Prostate gland (tissue), 2 donors: ENCODE measurements at regions of chr16 and their contacts with region 1.

Region 1: GRCh38 chr16:31179747-31180459 is at the start of gene FUS:
- DNase-seq: peak; percentile 90
- H3K4me3 ChIP-seq: peak within 1 kb of the TSS; percentile 95 to 99
- H3K27ac ChIP-seq: peak within 1 kb of the TSS; percentile 98
- H3K4me1 ChIP-seq: peaks cover 18% of the 10 kb centered on the region
- H3K27me3 ChIP-seq: no peaks in the 10 kb centered on the region
- CTCF ChIP-seq: peak in 1 of 4 experiments; percentile 4
- POLR2A ChIP-seq: peak; percentile 91
- total RNA-seq, gene FUS: 48.6 to 87.5 TPM

Region 2: DNA sequence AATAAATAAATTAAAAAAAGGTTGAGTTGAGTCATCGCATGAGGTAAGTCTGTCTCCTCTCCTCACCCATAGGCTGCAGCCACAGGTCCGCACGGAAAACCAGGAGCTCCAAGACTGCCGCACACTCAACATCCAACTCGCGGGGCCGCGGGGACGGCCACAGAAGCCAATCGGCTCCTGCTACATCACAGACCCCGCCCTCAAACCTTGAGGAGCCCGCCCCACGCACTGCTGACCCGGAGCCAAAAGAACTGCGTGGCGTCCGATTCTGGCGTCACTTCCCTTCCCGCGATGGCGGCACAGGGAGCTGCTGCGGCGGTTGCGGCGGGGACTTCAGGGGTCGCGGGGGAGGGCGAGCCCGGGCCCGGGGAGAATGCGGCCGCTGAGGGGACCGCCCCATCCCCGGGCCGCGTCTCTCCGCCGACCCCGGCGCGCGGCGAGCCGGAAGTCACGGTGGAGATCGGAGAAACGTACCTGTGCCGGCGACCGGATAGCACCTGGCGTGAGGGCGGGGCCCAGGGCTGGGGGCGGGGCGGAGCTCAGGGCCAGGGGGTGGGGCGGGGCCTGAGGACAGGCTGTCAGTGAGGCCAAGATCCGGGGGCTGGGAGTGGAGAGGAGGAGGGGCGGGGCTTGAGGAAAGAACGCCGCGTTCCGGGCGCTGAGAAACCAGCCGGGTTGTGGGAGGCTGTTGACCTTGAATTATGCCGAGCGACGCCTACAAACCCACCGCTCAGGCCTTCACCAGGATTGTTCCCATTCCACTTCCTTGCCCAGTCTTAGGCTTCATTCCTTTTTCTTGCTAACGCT is 62.3 kb before region 1 on chr16 and contains the start of gene KAT8:
- intact Hi-C with region 1: no loop called
- DNase-seq: peak; percentile 98
- H3K4me3 ChIP-seq: peak within 1 kb of the TSS; percentile 66 to 83
- H3K27ac ChIP-seq: peak within 1 kb of the TSS; percentile 96 to 98
- H3K4me1 ChIP-seq: peaks cover 3% of the 10 kb centered on the region
- H3K27me3 ChIP-seq: no peaks in the 10 kb centered on the region
- CTCF ChIP-seq: no peak
- POLR2A ChIP-seq: peak; percentile 78
- total RNA-seq, gene KAT8: 92.6 to 115 TPM

Region 3: DNA sequence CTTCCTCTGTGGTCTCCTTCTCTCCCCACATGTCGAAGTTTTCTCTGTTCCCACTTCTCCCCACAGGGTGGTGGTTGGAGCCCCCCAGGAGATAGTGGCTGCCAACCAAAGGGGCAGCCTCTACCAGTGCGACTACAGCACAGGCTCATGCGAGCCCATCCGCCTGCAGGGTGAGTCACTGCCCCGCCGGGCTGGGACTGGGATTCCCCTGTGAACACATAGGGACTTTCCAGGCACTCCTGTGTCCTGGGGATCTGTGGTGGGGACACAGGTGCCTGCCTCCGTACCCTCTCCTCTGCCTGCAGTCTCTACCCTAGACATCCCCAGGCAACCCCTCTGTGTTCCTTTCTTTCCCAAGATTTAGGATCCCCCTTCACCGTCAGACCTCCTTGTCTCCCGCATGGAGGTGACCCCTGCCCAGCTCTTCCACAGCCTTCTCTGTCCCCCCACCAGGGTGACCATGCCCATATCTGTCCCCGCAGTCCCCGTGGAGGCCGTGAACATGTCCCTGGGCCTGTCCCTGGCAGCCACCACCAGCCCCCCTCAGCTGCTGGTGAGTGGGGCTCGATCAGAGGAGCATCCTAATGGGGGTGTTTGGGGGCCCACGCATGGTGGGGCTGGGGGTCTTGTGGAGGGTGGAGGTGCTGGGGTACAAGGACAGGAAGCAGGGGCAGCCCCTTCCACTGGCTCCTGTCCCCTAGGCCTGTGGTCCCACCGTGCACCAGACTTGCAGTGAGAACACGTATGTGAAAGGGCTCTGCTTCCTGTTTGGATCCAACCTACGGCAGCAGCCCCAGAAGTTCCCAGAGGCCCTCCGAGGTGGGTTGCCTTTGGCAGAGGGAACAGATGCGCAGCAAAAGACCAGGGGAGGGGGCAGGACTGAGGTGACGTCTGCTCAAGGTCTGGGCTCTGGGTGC is 85.7 kb after region 1 on chr16:
- intact Hi-C with region 1: no loop called
- DNase-seq: no peak
- H3K4me3 ChIP-seq: no peak overlapping the region
- H3K27ac ChIP-seq: no peak overlapping the region
- H3K4me1 ChIP-seq: no peaks in the 10 kb centered on the region
- H3K27me3 ChIP-seq: no peaks in the 10 kb centered on the region
- CTCF ChIP-seq: no peak
- POLR2A ChIP-seq: no peak

Region 4: GRCh38 chr16:31441956-31442355 is 262.1 kb after region 1 on chr16:
- intact Hi-C with region 1: loop called (anchors 2 kb)
- DNase-seq: no peak
- H3K4me3 ChIP-seq: peak overlapping the region; percentile 62 to 73
- H3K27ac ChIP-seq: peak overlapping the region; percentile 86 to 90
- H3K4me1 ChIP-seq: no peaks in the 10 kb centered on the region
- H3K27me3 ChIP-seq: no peaks in the 10 kb centered on the region
- CTCF ChIP-seq: no peak
- POLR2A ChIP-seq: no peak